Activated CD8-positive, alpha-beta T cell treated with anti-CD3 and anti-CD28 coated beads for 36 hours (primary cell): ENCODE measurements at regions of chr17 and their contacts with region 1.

Region 1: GRCh38 chr17:27293898-27294688 is at the start of gene WSB1:
- DNase-seq: peak; percentile 94
- ATAC-seq: peak; percentile 88
- H3K4me3 Mint-ChIP-seq: peak within 1 kb of the TSS; percentile 98
- H3K27ac Mint-ChIP-seq: peak within 1 kb of the TSS; percentile 99
- H3K4me1 Mint-ChIP-seq: peaks cover 33% of the 10 kb centered on the region
- H3K27me3 Mint-ChIP-seq: no peaks in the 10 kb centered on the region
- CTCF ChIP-seq: no peak
- total RNA-seq, gene WSB1: 224 to 231 TPM

Region 2: DNA sequence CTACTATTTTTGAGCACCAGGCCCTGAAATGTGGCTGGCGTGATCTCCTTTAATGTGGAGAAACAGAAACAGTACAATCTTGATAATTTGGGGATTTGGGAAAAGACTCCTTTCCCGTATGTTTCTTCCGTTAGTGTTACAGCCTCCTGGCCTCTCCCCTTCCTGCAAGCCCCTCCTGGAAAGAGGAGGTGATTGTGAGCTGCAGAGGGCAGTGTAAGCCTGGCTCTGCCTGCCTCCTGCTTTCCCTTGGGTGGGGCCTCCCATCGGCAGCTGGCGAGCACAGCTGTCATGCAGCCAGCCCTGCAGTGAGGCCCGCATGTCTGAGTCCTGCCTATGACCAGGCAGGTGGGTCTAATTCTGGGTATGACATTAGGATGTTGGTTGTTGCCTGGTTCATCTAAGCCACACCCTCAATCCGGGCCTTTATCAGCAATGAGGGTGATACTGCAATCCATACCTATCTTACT is 48.8 kb before region 1 on chr17:
- CTCF ChIA-PET with region 1: interaction called, 5 read pairs
- POLR2A ChIA-PET with region 1: no interaction called
- intact Hi-C with region 1: loop called (anchors 10 kb)
- DNase-seq: peak; percentile 76
- ATAC-seq: peak; percentile 94
- H3K4me3 Mint-ChIP-seq: no peak overlapping the region
- H3K27ac Mint-ChIP-seq: no peak overlapping the region
- H3K4me1 Mint-ChIP-seq: peaks cover 11% of the 10 kb centered on the region
- H3K27me3 Mint-ChIP-seq: peaks cover 10% of the 10 kb centered on the region
- CTCF ChIP-seq: peak; percentile 65

Region 3: GRCh38 chr17:27315322-27315721 is 21.2 kb after region 1 on chr17:
- CTCF ChIA-PET with region 1: no interaction called
- POLR2A ChIA-PET with region 1: interaction called, 15 read pairs
- intact Hi-C with region 1: no loop called
- DNase-seq: no peak
- ATAC-seq: no peak
- H3K4me3 Mint-ChIP-seq: no peak overlapping the region
- H3K27ac Mint-ChIP-seq: no peak overlapping the region
- H3K4me1 Mint-ChIP-seq: no peaks in the 10 kb centered on the region
- H3K27me3 Mint-ChIP-seq: no peaks in the 10 kb centered on the region
- CTCF ChIP-seq: no peak

Region 4: DNA sequence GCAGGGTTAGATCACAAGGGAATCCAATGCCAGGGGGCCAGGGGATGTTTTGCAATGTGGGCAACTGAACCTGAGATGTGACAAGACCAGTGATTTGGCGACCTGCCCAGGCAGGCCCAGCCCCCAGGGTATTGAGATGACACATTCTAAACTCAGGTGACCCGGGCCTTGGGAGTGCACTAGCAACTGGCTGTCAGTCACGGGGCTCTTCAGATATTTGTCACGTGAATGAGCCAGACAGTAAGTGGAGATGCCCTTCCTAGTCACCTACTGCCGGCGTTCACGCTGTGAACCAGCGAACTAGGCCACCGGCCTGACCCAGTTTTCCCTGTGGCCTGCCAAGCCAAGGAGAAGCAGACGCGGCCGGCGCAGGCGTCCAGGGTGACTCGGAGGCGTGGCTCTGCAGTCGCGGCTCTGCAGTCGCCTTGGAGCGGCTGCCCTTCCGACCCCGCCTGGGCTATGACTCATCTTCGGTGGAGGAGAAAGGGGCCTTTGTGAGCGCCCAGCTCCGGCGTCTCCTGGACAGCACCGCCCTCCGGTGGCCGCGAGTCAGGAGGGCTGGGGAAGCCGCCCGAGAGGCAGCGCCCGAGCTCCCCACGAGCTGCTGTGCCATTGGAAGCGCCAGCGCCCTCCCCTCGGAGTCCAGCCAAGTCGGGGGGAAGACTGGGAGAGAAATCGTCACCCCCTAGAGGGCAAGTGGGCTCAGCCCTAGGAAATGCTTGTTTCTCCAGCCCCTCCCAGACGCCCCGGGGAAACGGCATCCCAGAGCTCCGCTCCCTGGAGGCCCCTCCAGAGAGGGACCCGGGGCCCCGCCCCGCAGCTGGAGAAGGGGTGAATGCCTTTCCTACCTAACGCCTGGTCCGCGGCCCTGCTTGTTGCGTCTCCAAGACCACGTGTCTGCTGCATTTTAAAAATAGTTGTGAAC is 38.7 kb after region 1 on chr17:
- CTCF ChIA-PET with region 1: interaction called, 9 read pairs
- POLR2A ChIA-PET with region 1: interaction called, 27 read pairs
- intact Hi-C with region 1: loop called (anchors 5 kb)
- DNase-seq: peak; percentile 97
- ATAC-seq: peak; percentile 88
- H3K4me3 Mint-ChIP-seq: peak overlapping the region; percentile 81
- H3K27ac Mint-ChIP-seq: peak overlapping the region; percentile 94
- H3K4me1 Mint-ChIP-seq: peaks cover 25% of the 10 kb centered on the region
- H3K27me3 Mint-ChIP-seq: no peaks in the 10 kb centered on the region
- CTCF ChIP-seq: peak; percentile 86